ENCODE measurements at regions of chr19 and their contacts with region 1.

Region 1: GRCh38 chr19:46513461-46514236 is 18.0 kb upstream of the PNMA8B start:
- DNase-seq: peak; percentile 60 to 90 (median 77)
- H3K4me3 ChIP-seq: peak overlapping the region in 1 of 59 donors; percentile 11
- H3K27ac ChIP-seq: peak overlapping the region in 1 of 59 donors; percentile 28
- H3K27me3 ChIP-seq: no peaks in the 10 kb centered on the region
- CTCF ChIP-seq: peak; percentile 45 to 100 (median 98)

Region 2: GRCh38 chr19:46404055-46404752 is 109.4 kb before region 1 on chr19:
- intact Hi-C with region 1: loop called in 1 of 2 experiments (anchors 5 kb)
- DNase-seq: peak in 1 of 10 donors; percentile 35
- H3K4me3 ChIP-seq: peak overlapping the region in 55 of 59 donors; percentile 10 to 65 (median 43)
- H3K27ac ChIP-seq: peak overlapping the region in 11 of 59 donors; percentile 0 to 58 (median 38)
- H3K27me3 ChIP-seq: peaks cover 0 to 8% (median 0%) of the 10 kb centered on the region in 45 donors
- CTCF ChIP-seq: peak in 21 of 56 donors; percentile 6 to 46 (median 27)

Region 3: DNA sequence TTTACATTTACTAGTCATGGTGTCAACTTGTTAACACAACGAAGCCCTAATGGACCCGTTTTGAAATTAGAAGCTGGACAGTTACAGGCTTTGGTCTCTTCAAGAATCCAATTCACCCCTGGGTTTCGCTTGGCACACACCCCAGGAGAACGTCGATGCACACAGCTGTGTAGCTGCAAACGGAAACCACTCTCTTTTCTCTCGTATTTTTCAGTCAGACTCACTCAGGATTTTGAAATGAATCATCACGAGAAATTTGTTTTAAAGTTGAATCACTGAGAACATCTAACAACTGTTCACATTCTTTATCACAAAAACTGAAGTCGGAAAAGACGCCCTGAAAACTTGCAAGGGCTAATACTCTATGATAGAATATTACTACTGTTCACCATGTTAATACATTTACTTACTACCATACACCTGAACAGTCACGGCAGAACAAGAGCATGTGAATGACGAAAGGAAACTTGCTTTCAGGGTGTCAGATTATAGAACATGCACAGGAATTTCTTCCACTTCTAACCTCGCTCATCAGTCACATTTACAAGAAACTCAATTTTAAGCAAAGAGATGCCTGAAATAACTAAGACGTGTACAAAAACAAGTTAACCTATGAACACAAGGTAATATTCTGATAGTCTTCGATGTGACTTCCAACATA is 47.0 kb before region 1 on chr19:
- intact Hi-C with region 1: no loop called
- DNase-seq: no peak
- H3K4me3 ChIP-seq: peak overlapping the region in 18 of 59 donors; percentile 1 to 34 (median 16)
- H3K27ac ChIP-seq: peak overlapping the region in 11 of 59 donors; percentile 7 to 44 (median 21)
- H3K27me3 ChIP-seq: no peaks in the 10 kb centered on the region
- CTCF ChIP-seq: no peak

Region 4: GRCh38 chr19:46495787-46496101 is 17.9 kb before region 1 on chr19 and contains the start of gene PNMA8B:
- intact Hi-C with region 1: loop called in 1 of 2 experiments (anchors 2 kb)
- DNase-seq: peak; percentile 78 to 93 (median 88)
- H3K4me3 ChIP-seq: peak within 1 kb of the TSS; percentile 51 to 94 (median 78)
- H3K27ac ChIP-seq: peak within 1 kb of the TSS in 58 of 59 donors; percentile 54 to 95 (median 86)
- H3K27me3 ChIP-seq: peaks cover 0 to 2% (median 0%) of the 10 kb centered on the region in 45 donors
- CTCF ChIP-seq: peak in 9 of 56 donors; percentile 4 to 25 (median 19)
- total RNA-seq, gene PNMA8B: 41.7 to 149 (median 97.4) TPM